ENCODE measurements at regions of chr4 and their contacts with region 1.

Region 1: GRCh38 chr4:168923526-168924194 is 86.4 kb downstream of the CBR4 start:
- DNase-seq: peak; percentile 42
- H3K4me3 ChIP-seq: no peak overlapping the region
- CTCF ChIP-seq: peak; percentile 78

Region 2: DNA sequence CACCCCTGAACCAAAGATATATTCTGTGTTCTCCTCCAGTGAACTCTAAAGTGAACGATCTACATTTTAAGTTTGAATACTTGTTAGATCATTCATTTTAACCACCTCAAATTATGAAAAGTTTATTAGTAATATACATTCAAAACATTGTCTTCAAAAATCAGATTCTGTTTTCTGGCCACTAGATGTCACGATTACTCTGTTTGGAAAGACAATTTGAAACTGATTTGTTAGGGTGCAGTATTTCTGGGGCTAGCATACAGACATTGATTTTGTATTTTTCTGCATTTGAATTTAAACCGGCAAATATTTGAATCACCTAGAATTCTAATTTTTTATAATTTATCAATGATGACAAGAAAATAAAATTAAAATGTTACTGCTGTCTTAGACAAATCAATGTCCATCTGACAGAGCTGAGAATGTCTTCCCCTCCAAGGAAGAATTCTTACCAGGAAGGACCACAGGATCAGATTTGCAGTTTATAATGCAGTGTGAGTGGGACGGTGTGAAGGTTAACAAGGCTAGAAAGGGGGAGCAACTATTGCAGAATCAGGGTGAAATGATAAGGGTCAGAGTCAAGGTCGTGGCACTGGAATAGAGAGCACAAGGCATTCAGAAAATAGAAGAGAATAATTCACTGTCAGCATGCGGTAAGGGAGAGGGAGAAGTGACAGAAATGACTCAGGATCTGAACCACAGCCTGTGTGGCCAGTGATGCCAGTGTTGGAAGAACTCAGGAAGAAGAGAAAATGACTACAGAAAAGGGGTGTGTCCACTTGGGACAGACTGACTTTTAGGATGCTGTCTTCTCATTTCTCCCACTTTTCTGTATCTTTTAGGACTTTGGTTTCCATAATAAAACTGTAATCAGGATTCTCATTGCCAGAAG is 739.7 kb before region 1 on chr4:
- CTCF ChIA-PET with region 1: interaction called, 11 read pairs
- POLR2A ChIA-PET with region 1: no interaction called
- DNase-seq: no peak
- H3K4me3 ChIP-seq: no peak overlapping the region
- CTCF ChIP-seq: peak; percentile 48

Region 3: DNA sequence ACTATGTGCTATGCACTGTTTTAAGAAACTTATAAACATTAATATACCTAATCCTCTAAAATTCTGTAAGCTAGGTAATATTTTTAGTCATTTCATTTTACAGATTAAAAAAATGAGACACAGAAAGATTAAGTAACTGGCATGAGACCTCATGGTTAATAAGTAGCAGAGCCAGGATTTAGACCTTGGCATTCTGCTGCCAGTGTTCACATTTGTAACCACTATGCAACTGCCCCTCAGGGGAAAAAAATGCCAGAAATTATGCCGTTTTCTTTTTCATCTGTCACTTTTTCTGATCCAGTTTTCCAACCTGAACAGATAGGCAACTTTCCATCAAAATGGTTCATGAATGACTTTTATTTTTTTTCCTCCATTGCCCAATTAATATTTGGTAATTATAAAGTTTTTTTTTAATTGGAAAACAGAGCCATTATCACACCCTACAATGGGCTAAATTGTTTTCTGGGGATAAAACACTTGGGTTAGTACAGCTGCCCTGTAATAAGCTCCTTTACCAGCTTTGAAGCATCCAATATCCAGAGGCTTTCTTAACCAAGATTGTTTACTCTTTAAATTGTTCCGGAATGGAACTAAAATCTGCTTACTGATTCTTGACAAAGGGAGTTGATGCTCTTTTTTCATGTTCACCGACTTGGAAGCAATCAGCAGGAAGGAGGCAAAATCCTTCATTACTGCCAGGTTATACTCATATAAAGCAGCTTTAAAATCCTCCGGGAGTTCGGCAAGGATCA is 548.7 kb before region 1 on chr4:
- CTCF ChIA-PET with region 1: no interaction called
- POLR2A ChIA-PET with region 1: no interaction called
- DNase-seq: no peak
- H3K4me3 ChIP-seq: no peak overlapping the region
- CTCF ChIP-seq: no peak

Region 4: GRCh38 chr4:168710353-168710946 is 213.2 kb before region 1 on chr4:
- CTCF ChIA-PET with region 1: interaction called, 120 read pairs
- POLR2A ChIA-PET with region 1: no interaction called
- DNase-seq: no peak
- H3K4me3 ChIP-seq: no peak overlapping the region
- CTCF ChIP-seq: peak; percentile 43

Region 5: DNA sequence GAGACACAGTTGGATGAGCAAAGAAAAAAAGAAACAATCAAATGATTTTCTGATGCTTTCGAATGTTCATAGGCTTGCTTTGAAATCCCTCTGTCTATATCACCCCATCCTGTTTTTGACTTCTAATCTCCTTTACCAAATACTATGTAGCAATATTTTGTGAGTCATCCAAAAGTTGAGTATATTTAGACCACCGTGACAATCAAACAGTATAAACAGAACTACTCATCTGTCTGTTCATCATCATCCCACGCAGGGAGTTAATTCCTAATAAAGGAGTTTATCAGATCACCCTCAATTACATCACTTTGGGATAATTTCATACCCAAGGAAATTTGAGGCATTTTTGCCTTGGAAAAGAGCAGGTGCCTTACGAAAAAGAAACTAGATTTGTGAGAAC is 126.5 kb before region 1 on chr4:
- CTCF ChIA-PET with region 1: no interaction called
- POLR2A ChIA-PET with region 1: no interaction called
- DNase-seq: no peak
- H3K4me3 ChIP-seq: no peak overlapping the region
- CTCF ChIP-seq: no peak

Region 6: GRCh38 chr4:168908093-168908492 is 15.6 kb before region 1 on chr4:
- CTCF ChIA-PET with region 1: interaction called, 109 read pairs
- POLR2A ChIA-PET with region 1: no interaction called
- DNase-seq: peak; percentile 44
- H3K4me3 ChIP-seq: no peak overlapping the region
- CTCF ChIP-seq: no peak

Region 7: DNA sequence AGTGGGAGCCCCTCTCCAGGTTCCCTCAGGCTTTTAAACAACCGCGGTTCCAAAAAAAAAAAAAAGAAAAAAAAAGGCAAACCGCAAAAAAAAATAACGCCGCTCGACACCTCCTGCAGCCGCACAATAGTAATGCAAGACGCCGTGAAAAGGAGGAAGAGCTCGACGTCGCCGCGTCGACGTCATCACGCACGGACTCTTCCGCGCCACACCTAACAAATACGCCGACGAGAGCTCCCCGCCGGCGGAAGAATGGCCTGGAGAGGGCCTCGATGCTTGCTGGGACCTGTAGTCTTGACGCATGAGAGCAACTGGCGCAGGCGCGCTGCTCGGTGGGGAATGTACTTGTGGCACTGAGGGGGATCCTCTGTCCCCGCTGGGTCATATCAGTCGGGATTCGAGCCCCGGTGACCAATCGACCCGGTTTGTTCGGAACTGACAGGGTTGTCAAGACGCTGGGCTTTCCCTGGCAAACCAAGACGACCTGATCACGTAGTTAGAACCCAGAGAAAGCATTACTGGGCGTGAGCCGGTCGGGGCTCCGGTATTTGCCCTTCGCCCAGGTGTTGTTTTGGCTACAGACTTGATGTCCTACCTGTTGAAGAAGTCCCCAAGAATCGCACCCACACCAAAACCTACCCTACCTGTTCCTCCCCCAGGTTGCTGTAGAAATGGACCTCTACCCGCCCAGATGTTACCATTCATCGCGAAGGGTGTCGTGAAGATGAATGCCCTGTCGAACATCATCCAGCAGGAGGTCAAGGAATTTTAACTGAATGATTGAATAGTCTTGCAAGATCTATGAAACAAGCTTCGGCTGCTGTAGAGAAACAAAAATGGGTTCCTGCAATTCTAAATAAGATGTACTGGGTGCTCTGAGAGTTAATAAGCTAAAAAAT is 86.7 kb after region 1 on chr4 and contains the start of gene CBR4:
- CTCF ChIA-PET with region 1: interaction called, 70 read pairs
- POLR2A ChIA-PET with region 1: interaction called, 3 read pairs
- DNase-seq: peak; percentile 94
- H3K4me3 ChIP-seq: peak within 1 kb of the TSS; percentile 77
- CTCF ChIP-seq: peak; percentile 6

Region 8: DNA sequence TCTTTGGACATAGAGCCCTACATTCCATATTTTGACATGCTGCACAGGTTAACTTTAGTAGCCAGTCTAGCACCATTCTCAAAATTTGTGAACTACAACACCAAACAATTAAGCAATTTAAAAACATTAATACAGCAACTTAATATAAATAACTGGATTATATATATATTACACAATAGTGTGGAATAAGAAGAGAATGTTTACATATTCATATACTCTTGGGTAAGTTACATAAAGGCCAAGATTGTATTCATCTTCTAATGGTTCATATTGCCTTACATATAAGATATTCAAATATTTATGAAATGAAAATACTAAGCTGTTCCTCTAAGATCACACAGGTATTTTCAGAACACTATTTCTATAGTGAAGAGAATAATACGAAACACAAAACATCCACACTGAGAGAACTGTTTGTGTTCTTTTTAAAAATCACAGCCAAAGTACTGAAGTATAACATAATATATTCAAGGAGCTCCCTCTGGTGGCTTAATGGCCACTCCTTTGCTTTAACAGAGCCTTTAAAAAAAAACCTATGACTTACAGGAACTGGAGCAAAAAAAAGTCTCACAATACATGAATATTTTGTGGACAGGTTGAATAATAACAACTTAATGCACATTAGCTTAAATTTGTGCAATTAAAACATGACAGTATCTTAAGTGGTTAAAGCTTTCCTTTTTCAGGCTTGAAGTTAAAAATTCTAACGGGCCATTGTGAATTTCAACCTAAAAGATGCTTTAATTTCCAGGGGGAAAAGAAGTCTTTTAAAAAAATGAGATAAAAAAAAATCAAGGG is 642.6 kb after region 1 on chr4:
- CTCF ChIA-PET with region 1: interaction called, 76 read pairs
- POLR2A ChIA-PET with region 1: no interaction called
- DNase-seq: no peak
- H3K4me3 ChIP-seq: no peak overlapping the region
- CTCF ChIP-seq: peak; percentile 33

Measured in AG04449 (cell line).